Activated CD8-positive, alpha-beta memory T cell treated with anti-CD3 and anti-CD28 coated beads, Interleukin-2, amount 10 ng/mL, durations not matched to agents 7 days and 5 days (primary cell): ENCODE measurements at regions of chr14 and their contacts with region 1.

Region 1: DNA sequence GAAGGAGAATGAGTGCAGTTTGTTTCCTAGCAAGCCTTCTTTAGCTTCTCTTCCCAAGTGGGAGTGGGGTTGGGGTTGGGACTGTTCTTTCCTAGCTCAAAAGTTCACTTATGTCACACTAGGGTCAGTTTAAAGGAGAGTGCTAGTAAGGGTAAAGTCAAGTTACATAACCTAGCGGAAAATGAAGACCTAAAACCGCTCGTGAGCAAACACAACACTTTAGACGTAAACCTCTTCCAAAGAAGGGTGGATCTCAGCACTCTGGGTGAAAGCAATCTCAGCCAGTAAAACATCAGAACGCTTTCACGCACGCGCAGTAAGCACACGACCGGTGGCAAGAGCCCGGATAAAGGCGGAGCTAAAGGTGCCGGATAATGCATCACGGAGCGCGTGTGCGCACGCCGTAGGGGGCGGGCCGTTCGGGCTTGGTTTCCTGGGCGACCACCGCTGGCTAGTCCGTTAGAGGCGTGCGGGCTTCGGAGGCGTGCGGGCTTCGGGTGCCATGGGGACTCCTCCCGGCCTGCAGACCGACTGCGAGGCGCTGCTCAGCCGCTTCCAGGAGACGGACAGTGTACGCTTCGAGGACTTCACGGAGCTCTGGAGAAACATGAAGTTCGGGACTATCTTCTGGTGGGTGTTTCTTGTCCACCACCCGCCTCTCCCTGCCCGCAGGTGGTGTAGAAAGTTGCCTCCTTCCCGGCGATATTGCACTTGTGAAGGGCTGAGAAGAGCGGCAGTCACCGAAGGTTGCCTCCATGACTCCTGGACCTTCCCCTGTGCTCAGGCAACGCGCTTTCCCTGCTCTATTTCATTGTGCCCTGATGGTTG is at the start of gene SNAPC1:
- DNase-seq: peak; percentile 99
- ATAC-seq: peak; percentile 99
- H3K4me3 Mint-ChIP-seq: peak within 1 kb of the TSS; percentile 94
- H3K27ac Mint-ChIP-seq: peak within 1 kb of the TSS; percentile 98
- H3K4me1 Mint-ChIP-seq: peaks cover 42% of the 10 kb centered on the region
- H3K27me3 Mint-ChIP-seq: no peaks in the 10 kb centered on the region
- total RNA-seq, gene SNAPC1: 5.1 to 5.8 TPM

Region 2: GRCh38 chr14:61750708-61751474 is 11.3 kb before region 1 on chr14:
- CTCF ChIA-PET with region 1: interaction called, 18 read pairs
- DNase-seq: peak; percentile 91
- ATAC-seq: peak; percentile 97
- H3K4me3 Mint-ChIP-seq: peak overlapping the region; percentile 97
- H3K27ac Mint-ChIP-seq: peak overlapping the region; percentile 83
- H3K4me1 Mint-ChIP-seq: peaks cover 38% of the 10 kb centered on the region
- H3K27me3 Mint-ChIP-seq: peaks cover 6% of the 10 kb centered on the region